HepG2 (cell line): ENCODE measurements at regions of chr15 and their contacts with region 1.

Region 1: DNA sequence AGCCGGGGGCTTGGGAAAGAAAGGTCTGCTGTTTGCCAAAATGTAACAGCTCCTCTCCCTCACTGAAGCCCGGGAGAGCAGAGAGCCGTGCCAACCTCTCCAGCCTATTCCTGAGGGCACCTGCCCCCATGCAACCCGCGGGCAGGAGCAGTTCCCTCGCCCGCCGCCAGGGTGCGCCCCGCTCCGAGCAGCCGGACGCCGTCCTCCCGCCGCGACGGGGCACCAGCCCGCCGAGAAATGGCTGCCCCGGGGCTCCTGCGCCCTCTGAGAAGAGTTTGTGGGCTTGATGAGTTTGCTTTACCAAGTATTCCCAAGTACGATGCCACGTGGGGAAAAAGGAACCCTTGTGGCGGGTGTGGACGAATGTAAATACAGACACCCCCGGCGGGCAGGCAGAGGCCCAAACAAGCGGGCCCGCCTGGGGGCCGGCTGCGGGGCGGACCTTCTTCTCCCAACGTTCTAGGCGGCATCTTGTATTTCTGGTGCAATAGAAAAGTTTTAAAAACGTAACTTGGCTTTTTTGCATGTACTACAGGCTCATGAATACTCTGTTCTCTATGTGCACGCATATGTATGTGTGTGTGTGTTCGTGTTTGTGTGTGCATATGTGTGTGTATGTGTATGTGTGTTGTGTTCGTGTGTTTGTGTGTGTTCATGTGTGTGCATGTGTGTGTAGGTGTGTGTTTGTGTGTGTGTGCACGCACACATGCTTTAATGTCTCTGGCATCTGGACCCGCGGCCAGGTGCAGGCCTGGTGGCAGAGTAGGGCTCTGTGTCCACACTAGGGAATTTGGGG is 162.9 kb downstream of the CHSY1 start:
- DNase-seq: peak; percentile 35
- ATAC-seq: peak; percentile 67
- H3K4me3 ChIP-seq: peak overlapping the region; percentile 66 to 81 (median 78)
- H3K27ac ChIP-seq: peak overlapping the region; percentile 60
- H3K4me1 ChIP-seq: peaks cover 62% of the 10 kb centered on the region
- H3K27me3 ChIP-seq: peaks cover 0 to 4% of the 10 kb centered on the region in 2 experiments; a peak in 1 of 5 replicates
- CTCF ChIP-seq: peak; percentile 90
- EP300 ChIP-seq: no peak
- POLR2A ChIP-seq: no peak; a peak in 1 of 4 replicates
- RAD21 ChIP-seq: peak; percentile 88

Region 2: DNA sequence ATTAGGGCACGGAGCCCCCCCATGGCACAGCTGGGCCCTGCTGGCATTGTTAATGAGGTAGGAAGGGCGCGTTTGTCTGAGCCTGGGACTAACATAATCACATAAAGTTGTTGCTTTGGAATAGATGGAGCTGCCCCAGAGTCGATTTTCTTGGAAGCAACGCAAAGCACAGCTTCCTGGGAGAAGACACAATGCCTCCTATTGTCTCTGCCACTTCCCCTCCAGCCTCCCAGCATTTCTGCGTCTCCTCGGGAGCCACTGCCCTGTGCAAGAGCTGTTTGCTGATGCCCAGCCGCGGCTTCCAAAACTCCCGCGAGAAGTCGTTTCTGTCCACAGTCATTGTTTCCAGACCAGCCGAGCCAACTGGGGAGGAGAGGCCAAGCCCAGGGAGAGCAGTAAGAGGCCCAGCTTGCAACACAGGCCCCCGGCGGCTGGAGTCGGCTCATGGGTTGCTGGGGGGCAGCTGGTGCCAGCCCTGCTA is 227.4 kb before region 1 on chr15:
- CTCF ChIA-PET with region 1: no interaction called
- POLR2A ChIA-PET with region 1: no interaction called
- in situ Hi-C with region 1: no loop called
- intact Hi-C with region 1: no loop called
- DNase-seq: no peak
- ATAC-seq: no peak
- H3K4me3 ChIP-seq: no peak overlapping the region
- H3K27ac ChIP-seq: no peak overlapping the region
- H3K4me1 ChIP-seq: no peaks in the 10 kb centered on the region
- H3K27me3 ChIP-seq: peaks cover 3 to 41% of the 10 kb centered on the region in 2 experiments; a peak in 3 of 5 replicates
- CTCF ChIP-seq: no peak
- EP300 ChIP-seq: no peak
- POLR2A ChIP-seq: no peak
- RAD21 ChIP-seq: no peak

Region 3: GRCh38 chr15:101014921-101015841 is 73.8 kb before region 1 on chr15:
- CTCF ChIA-PET with region 1: interaction called, 6 read pairs
- POLR2A ChIA-PET with region 1: no interaction called
- in situ Hi-C with region 1: no loop called
- intact Hi-C with region 1: loop called (anchors 2 kb)
- DNase-seq: peak; percentile 53
- ATAC-seq: peak; percentile 78
- H3K4me3 ChIP-seq: no peak overlapping the region
- H3K27ac ChIP-seq: no peak overlapping the region
- H3K4me1 ChIP-seq: peaks cover 20% of the 10 kb centered on the region
- H3K27me3 ChIP-seq: peaks cover 9 to 61% of the 10 kb centered on the region in 2 experiments; a peak in 4 of 5 replicates
- CTCF ChIP-seq: peak; percentile 95
- EP300 ChIP-seq: no peak
- POLR2A ChIP-seq: no peak
- RAD21 ChIP-seq: peak; percentile 81

Region 4: GRCh38 chr15:101070502-101071273 is 18.3 kb before region 1 on chr15:
- CTCF ChIA-PET with region 1: no interaction called
- POLR2A ChIA-PET with region 1: interaction called, 36 read pairs
- in situ Hi-C with region 1: no loop called
- intact Hi-C with region 1: loop called (anchors 1 kb)
- DNase-seq: peak; percentile 99
- ATAC-seq: peak; percentile 84
- H3K4me3 ChIP-seq: peak overlapping the region; percentile 27 to 62 (median 50); a peak in 5 of 6 replicates
- H3K27ac ChIP-seq: peak overlapping the region; percentile 96
- H3K4me1 ChIP-seq: peaks cover 66% of the 10 kb centered on the region
- H3K27me3 ChIP-seq: no peaks in the 10 kb centered on the region
- CTCF ChIP-seq: peak; percentile 26; the same call in 1 of the 2 replicates
- EP300 ChIP-seq: peak; percentile 93 to 97
- POLR2A ChIP-seq: peak in 1 of 2 experiments; percentile 75; a peak in 2 of 4 replicates
- RAD21 ChIP-seq: no peak

Region 5: DNA sequence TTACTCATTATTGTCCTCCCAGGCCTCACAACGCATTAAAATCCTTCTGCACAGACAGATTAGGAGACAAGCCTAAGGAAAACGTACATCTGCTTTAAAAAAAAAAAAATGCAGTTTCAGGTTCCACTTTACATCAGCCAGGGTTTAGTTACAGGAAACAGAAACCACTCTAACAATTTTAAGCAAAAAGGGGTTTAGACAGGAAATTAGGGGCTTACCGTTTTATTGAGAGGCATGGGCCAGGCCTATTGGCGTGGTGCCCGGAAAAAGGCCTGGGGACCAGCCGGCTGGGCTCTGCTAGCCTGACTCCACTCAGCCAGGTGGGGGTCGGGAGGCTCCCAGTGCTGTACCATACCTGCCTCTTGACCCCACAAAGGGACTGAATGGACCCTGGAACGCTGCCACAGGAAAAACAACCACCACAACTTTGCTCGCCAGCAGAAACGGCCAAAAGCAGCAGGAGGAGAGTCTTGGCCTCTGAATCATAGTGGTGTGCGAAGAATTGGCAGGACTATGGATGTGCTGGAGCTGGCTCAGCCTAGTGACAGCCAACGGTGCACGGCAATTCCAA is 38.6 kb after region 1 on chr15:
- CTCF ChIA-PET with region 1: no interaction called
- POLR2A ChIA-PET with region 1: no interaction called
- in situ Hi-C with region 1: loop called (anchors 5 kb)
- intact Hi-C with region 1: loop called (anchors 5 kb)
- DNase-seq: peak; percentile 24
- ATAC-seq: peak; percentile 74
- H3K4me3 ChIP-seq: peak overlapping the region in 1 of 3 experiments; percentile 27; a peak in 2 of 6 replicates
- H3K27ac ChIP-seq: no peak overlapping the region
- H3K4me1 ChIP-seq: peaks cover 41% of the 10 kb centered on the region
- H3K27me3 ChIP-seq: peaks cover 2 to 33% of the 10 kb centered on the region in 2 experiments; a peak in 3 of 5 replicates
- CTCF ChIP-seq: no peak
- EP300 ChIP-seq: no peak
- POLR2A ChIP-seq: no peak
- RAD21 ChIP-seq: no peak

Region 6: DNA sequence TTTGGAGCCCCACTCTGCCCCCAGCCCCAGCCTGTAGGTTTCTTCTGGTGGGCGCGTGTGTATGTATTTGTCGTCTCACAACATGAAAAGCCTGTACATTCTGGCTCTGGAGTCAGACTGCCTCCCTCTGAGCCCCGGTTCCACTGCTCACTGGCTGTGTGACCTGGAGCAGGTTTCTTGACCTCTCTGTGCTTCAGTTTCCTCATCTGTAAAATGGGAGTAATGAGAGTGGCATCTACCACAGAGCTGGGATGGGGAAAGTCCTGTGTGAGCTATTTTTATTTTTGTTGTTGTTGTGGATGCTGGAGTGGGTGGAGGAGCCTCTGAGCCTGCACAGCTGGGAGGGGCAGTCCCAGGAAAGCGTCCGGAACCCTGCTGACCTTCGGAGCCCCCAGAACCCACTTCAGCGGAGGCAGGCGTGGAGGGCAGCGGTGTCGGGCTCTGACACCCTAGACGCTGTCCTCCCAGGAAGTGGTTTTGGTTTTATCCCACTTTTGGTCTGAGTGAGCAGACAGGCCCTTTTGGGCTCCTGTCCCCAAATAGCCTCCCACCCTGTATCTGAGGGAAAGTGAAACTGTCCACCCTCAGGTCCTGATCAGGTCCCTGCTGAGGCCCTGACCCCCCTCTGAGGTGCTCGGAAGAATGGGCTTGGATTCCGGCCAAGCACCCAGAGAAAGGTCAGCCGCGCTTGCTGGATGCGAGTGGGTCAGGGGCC is 59.3 kb after region 1 on chr15:
- CTCF ChIA-PET with region 1: no interaction called
- POLR2A ChIA-PET with region 1: no interaction called
- in situ Hi-C with region 1: no loop called
- intact Hi-C with region 1: loop called (anchors 2 kb)
- DNase-seq: no peak
- ATAC-seq: no peak; the same call in none of the 3 replicates
- H3K4me3 ChIP-seq: peak overlapping the region in 2 of 3 experiments; percentile 7 to 55; a peak in 2 of 6 replicates
- H3K27ac ChIP-seq: no peak overlapping the region
- H3K4me1 ChIP-seq: peaks cover 21% of the 10 kb centered on the region
- H3K27me3 ChIP-seq: peaks cover 0 to 6% of the 10 kb centered on the region in 2 experiments; a peak in 3 of 5 replicates
- CTCF ChIP-seq: no peak
- EP300 ChIP-seq: no peak
- POLR2A ChIP-seq: no peak
- RAD21 ChIP-seq: no peak

Region 7: DNA sequence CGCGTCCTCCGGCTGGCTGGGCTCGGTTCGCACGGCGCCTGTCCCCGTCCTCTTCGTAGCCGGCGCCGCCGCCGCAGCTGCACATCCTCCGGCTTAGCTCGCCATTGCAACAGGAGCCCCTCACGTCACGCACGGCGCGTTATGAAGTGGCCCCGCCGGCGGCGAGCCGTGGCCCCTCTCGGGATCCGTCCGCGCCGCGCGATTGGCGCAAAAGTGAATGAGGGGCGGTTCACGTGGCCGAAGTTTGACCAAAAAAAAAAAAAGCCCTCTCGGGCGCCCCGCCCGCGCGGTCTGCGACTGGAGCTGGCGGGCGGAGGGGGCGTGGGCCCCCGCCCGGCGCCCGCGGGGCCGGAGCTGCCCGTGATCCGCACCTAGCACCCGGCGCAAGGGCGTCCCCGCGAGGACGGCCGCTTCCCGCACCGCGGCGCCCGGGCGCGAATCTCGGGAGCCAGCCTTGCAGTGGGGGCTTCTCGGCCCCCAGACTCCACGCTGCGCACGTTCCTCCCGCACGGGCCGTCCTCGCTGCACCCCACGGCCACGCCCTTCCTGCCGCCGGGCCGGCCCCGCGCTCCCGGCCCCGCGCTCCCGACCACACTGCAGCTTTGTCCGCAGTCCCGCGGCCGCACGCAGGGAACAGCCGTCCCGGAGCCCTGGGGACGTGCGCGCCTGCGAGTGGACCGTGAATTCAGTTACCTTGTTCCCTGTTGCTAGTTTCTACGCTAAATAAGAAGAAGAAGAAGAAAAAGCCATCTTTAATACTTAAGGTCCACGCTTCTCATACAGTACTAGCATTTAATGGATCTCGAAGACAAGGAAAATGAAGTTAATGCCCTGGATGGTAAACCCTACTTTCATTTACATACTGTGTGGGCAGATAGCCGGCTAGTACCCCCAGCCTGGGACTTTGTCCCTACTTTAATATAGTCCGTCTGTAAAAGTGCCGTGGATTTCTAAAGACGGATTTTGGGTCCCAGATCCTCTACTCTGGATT is 163.1 kb after region 1 on chr15 and contains the start of gene CHSY1:
- CTCF ChIA-PET with region 1: interaction called, 37 read pairs
- POLR2A ChIA-PET with region 1: interaction called, 8 read pairs
- in situ Hi-C with region 1: loop called (anchors 10 kb)
- intact Hi-C with region 1: loop called (anchors 1 kb)
- DNase-seq: peak; percentile 67
- ATAC-seq: peak; percentile 73
- H3K4me3 ChIP-seq: peak within 1 kb of the TSS; percentile 77 to 82 (median 81)
- H3K27ac ChIP-seq: peak within 1 kb of the TSS; percentile 52
- H3K4me1 ChIP-seq: peaks cover 62% of the 10 kb centered on the region
- H3K27me3 ChIP-seq: no peaks in the 10 kb centered on the region
- CTCF ChIP-seq: 0 out of 2 replicates have a peak, but pooled peaks have one; percentile 28
- EP300 ChIP-seq: no peak
- POLR2A ChIP-seq: peak; percentile 35 to 80; a peak in 3 of 4 replicates
- RAD21 ChIP-seq: peak; percentile 19
- total RNA-seq, gene CHSY1: 12.8 and 13.7 TPM in 2 replicates

Region 8: GRCh38 chr15:101258238-101259144 is 169.5 kb after region 1 on chr15:
- CTCF ChIA-PET with region 1: interaction called, 37 read pairs
- POLR2A ChIA-PET with region 1: interaction called, 3 read pairs
- in situ Hi-C with region 1: loop called (anchors 10 kb)
- intact Hi-C with region 1: loop called (anchors 1 kb)
- DNase-seq: peak; percentile 57
- ATAC-seq: peak; percentile 68
- H3K4me3 ChIP-seq: peak overlapping the region in 1 of 3 experiments; percentile 25; a peak in 1 of 6 replicates
- H3K27ac ChIP-seq: no peak overlapping the region
- H3K4me1 ChIP-seq: peaks cover 33% of the 10 kb centered on the region
- H3K27me3 ChIP-seq: peaks cover 0 to 8% of the 10 kb centered on the region in 2 experiments; a peak in 3 of 5 replicates
- CTCF ChIP-seq: peak; percentile 88
- EP300 ChIP-seq: no peak
- POLR2A ChIP-seq: no peak
- RAD21 ChIP-seq: peak; percentile 73